Activated naive CD4-positive, alpha-beta T cell treated with anti-CD3 and anti-CD28 coated beads for 36 hours (primary cell): ENCODE measurements at regions of chr6 and their contacts with region 1.

Region 1: DNA sequence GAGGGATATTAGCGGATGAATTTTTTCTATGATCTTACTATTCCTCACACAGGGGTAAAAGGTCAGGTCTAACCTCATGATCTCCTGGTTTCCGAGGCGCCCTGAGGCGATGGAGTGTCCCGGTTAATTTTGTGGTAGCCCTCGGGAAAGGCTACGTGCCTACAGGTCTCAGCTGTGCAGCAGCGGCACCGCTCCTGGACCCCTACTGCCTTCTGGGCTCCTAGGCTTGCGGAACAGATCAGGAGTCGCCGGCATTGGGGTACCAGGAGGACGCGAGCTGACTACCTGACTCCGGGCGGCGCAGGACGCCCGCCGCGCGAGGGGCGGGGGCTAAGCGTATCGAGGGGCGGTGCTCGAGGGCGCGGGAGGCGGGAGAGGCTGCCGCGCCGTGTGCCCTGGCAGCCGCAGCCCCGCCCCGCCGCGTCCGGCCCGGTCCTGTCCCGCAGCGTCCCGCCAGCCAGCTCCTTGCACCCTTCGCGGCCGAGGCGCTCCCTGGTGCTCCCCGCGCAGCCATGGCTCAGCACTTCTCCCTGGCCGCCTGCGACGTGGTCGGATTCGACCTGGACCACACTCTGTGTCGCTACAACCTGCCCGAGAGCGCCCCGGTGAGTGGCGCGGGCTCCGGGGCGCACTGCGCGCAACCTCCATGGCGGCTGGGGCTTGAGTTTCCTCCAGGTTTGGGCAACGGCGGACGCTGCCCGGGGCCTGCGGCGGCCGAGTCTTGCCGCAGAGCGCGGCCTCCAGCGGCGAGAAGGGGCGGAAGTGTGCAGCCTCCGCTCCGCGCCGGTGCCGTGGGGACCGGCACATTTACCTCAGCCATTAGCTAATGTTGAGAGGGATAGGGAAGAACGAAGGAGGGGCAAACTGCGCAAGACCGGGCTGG is at the start of gene NT5DC1:
- DNase-seq: peak; percentile 87
- H3K4me3 Mint-ChIP-seq: peak within 1 kb of the TSS; percentile 90
- H3K27ac Mint-ChIP-seq: peak within 1 kb of the TSS; percentile 81
- H3K4me1 Mint-ChIP-seq: peaks cover 43% of the 10 kb centered on the region
- H3K27me3 Mint-ChIP-seq: no peaks in the 10 kb centered on the region
- total RNA-seq, gene NT5DC1: 59.7 to 62.6 TPM

Region 2: GRCh38 chr6:116111552-116112528 is 11.2 kb after region 1 on chr6:
- CTCF ChIA-PET with region 1: interaction called, 19 read pairs
- intact Hi-C with region 1: no loop called
- DNase-seq: peak; percentile 61
- H3K4me3 Mint-ChIP-seq: no peak overlapping the region
- H3K27ac Mint-ChIP-seq: no peak overlapping the region
- H3K4me1 Mint-ChIP-seq: peaks cover 9% of the 10 kb centered on the region
- H3K27me3 Mint-ChIP-seq: no peaks in the 10 kb centered on the region

Region 3: GRCh38 chr6:116246089-116246488 is 145.4 kb after region 1 on chr6:
- CTCF ChIA-PET with region 1: no interaction called
- intact Hi-C with region 1: no loop called
- DNase-seq: no peak
- H3K4me3 Mint-ChIP-seq: no peak overlapping the region
- H3K27ac Mint-ChIP-seq: no peak overlapping the region
- H3K4me1 Mint-ChIP-seq: peaks cover 23% of the 10 kb centered on the region
- H3K27me3 Mint-ChIP-seq: no peaks in the 10 kb centered on the region

Region 4: GRCh38 chr6:116279260-116280063 is 178.8 kb after region 1 on chr6 and contains the start of gene TSPYL1:
- CTCF ChIA-PET with region 1: no interaction called
- intact Hi-C with region 1: loop called (anchors 1 kb)
- DNase-seq: peak; percentile 97
- H3K4me3 Mint-ChIP-seq: peak within 1 kb of the TSS; percentile 93
- H3K27ac Mint-ChIP-seq: peak within 1 kb of the TSS; percentile 96
- H3K4me1 Mint-ChIP-seq: peaks cover 36% of the 10 kb centered on the region
- H3K27me3 Mint-ChIP-seq: no peaks in the 10 kb centered on the region
- total RNA-seq, gene TSPYL1: 33.4 to 34.7 TPM

Region 5: DNA sequence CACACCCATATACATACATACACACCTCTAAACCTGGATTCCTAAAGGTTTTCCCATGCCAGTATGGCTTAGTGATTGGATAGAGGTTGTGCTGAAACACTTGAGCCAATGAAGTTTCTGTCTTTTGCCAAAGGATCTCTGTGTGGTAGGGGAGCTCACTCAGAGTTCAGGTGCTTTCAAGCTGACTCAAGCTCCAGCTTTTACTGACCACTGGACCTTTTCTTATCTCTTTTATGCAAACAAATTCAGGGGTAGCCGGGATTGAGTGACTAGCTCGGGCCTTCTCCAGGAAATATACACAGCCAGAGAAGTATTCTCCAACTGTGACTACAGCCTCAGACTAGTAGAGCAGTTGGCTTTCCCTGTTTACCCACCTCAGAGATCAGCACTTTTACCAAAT is 248.6 kb after region 1 on chr6:
- CTCF ChIA-PET with region 1: no interaction called
- intact Hi-C with region 1: no loop called
- DNase-seq: no peak
- H3K4me3 Mint-ChIP-seq: no peak overlapping the region
- H3K27ac Mint-ChIP-seq: no peak overlapping the region
- H3K4me1 Mint-ChIP-seq: no peaks in the 10 kb centered on the region
- H3K27me3 Mint-ChIP-seq: no peaks in the 10 kb centered on the region

Region 6: DNA sequence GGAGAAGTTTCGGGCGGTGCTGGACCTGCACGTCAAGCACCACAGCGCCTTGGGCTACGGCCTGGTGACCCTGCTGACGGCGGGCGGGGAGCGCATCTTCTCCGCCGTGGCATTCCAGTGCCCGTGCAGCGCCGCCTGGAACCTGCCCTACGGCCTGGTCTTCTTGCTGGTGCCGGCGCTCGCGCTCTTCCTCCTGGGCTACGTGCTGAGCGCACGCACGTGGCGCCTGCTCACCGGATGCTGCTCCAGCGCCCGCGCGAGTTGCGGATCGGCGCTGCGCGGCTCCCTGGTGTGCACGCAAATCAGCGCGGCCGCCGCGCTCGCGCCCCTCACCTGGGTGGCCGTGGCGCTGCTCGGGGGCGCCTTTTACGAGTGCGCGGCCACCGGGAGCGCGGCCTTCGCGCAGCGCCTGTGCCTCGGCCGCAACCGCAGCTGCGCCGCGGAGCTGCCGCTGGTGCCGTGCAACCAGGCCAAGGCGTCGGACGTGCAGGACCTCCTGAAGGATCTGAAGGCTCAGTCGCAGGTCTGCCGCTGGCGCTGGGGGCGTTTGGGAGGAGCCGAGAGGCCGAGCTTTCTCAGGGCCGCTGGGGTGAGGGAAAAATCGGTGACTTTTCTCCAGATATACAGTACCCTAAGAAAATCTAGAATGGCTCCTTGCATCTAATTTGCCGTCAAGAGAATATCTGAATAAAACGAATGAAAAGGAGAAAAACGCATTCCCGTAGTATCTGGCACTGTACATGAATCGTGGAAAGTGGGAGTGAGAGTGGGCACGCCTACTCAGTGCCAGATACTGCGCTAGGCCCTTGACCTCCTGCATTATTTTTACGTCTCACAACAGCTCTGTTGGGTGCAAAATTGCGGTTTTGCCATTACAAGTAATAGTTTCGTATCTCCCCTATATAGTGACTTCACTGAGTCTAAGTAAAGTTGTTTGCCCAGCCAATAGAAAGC is 361.5 kb after region 1 on chr6:
- CTCF ChIA-PET with region 1: no interaction called
- intact Hi-C with region 1: loop called (anchors 10 kb)
- DNase-seq: peak; percentile 54
- H3K4me3 Mint-ChIP-seq: peak overlapping the region; percentile 56
- H3K27ac Mint-ChIP-seq: no peak overlapping the region
- H3K4me1 Mint-ChIP-seq: peaks cover 20% of the 10 kb centered on the region
- H3K27me3 Mint-ChIP-seq: peaks cover 22% of the 10 kb centered on the region

Region 7: GRCh38 chr6:116570856-116571682 is 470.4 kb after region 1 on chr6 and contains the start of gene RWDD1:
- CTCF ChIA-PET with region 1: no interaction called
- intact Hi-C with region 1: loop called (anchors 2 kb)
- DNase-seq: peak; percentile 99
- H3K4me3 Mint-ChIP-seq: peak within 1 kb of the TSS; percentile 93
- H3K27ac Mint-ChIP-seq: peak within 1 kb of the TSS; percentile 88
- H3K4me1 Mint-ChIP-seq: peaks cover 49% of the 10 kb centered on the region
- H3K27me3 Mint-ChIP-seq: no peaks in the 10 kb centered on the region
- total RNA-seq, gene RWDD1: 47.8 to 50.3 TPM